K562 (cell line): ENCODE measurements at regions of chr1 and their contacts with region 1.

Region 1: GRCh38 chr1:157307491-157307890 is 169.3 kb upstream of the ETV3 start:
- DNase-seq: no peak
- ATAC-seq: no peak
- H3K4me3 ChIP-seq: no peak overlapping the region
- H3K27ac ChIP-seq: no peak overlapping the region
- H3K4me1 ChIP-seq: peaks cover 10 to 32% of the 10 kb centered on the region in 2 experiments
- H3K27me3 ChIP-seq: no peaks in the 10 kb centered on the region
- CTCF ChIP-seq: no peak
- EP300 ChIP-seq: no peak
- POLR2A ChIP-seq: no peak
- RAD21 ChIP-seq: no peak

Region 2: GRCh38 chr1:156214028-156214748 is 1093.3 kb before region 1 on chr1:
- CTCF ChIA-PET with region 1: no interaction called
- POLR2A ChIA-PET with region 1: no interaction called
- in situ Hi-C with region 1: no loop called
- intact Hi-C with region 1: no loop called
- DNase-seq: peak; percentile 44 to 61 (median 48)
- ATAC-seq: no peak
- H3K4me3 ChIP-seq: peak overlapping the region; percentile 78
- H3K27ac ChIP-seq: peak overlapping the region; percentile 100
- H3K4me1 ChIP-seq: peaks cover 11 to 17% of the 10 kb centered on the region in 2 experiments; a peak in 4 of 5 replicates
- H3K27me3 ChIP-seq: no peaks in the 10 kb centered on the region
- CTCF ChIP-seq: no peak
- EP300 ChIP-seq: no peak
- POLR2A ChIP-seq: no peak
- RAD21 ChIP-seq: no peak

Region 3: DNA sequence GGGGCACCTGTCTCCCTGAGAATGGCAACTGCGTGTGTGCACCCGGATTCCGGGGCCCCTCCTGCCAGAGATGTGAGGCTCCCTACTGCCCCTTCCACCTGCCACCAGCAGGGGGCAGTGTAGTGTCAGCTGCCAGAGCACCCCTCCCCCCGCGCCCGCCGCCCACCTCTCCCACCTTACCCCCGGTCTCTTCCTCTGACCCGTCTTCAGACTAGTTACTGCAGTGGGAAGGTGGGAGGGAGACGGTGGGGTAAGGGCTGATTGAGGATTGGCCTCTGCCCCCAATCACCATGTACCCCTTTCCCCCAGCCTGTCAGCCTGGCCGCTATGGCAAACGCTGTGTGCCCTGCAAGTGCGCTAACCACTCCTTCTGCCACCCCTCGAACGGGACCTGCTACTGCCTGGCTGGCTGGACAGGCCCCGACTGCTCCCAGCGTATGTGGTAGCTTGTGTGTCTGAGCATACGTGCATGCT is 397.1 kb before region 1 on chr1:
- CTCF ChIA-PET with region 1: no interaction called
- POLR2A ChIA-PET with region 1: no interaction called
- in situ Hi-C with region 1: no loop called
- intact Hi-C with region 1: no loop called
- DNase-seq: peak; percentile 79 to 89 (median 86)
- ATAC-seq: peak; percentile 49
- H3K4me3 ChIP-seq: peak overlapping the region; percentile 14; the same call in 1 of the 2 replicates
- H3K27ac ChIP-seq: no peak overlapping the region
- H3K4me1 ChIP-seq: peaks cover 52 to 73% of the 10 kb centered on the region in 2 experiments
- H3K27me3 ChIP-seq: no peaks in the 10 kb centered on the region
- CTCF ChIP-seq: peak; percentile 72 to 82 (median 76)
- EP300 ChIP-seq: no peak
- POLR2A ChIP-seq: no peak
- RAD21 ChIP-seq: peak; percentile 49 to 64

Region 4: DNA sequence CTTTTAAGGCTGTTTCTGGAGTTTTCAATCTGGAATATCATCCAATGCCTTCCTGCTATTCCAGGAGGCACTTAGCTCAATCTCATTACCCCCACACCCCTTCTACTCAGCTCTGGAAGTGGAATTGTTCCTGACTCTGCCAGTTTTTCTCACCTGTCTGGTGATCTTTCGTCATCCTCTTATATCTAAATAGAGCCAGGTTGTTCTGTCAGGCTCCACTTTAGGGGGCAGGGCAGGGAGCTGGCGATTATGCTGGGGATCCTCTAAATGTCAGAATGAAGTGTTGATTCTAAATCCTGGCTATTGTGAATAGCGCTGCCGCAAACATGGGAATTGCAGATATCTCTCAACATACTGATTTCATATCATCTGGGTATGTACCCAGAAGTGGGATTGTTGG is 105.7 kb before region 1 on chr1:
- CTCF ChIA-PET with region 1: no interaction called
- POLR2A ChIA-PET with region 1: interaction called, 3 read pairs
- in situ Hi-C with region 1: loop called (anchors 5 kb)
- intact Hi-C with region 1: loop called (anchors 1 kb)
- DNase-seq: no peak
- ATAC-seq: no peak
- H3K4me3 ChIP-seq: no peak overlapping the region
- H3K27ac ChIP-seq: no peak overlapping the region
- H3K4me1 ChIP-seq: peaks cover 3 to 4% of the 10 kb centered on the region in 2 experiments; a peak in 2 of 5 replicates
- H3K27me3 ChIP-seq: peaks cover 0 to 4% of the 10 kb centered on the region in 2 experiments; a peak in 1 of 5 replicates
- CTCF ChIP-seq: no peak
- EP300 ChIP-seq: no peak
- POLR2A ChIP-seq: no peak
- RAD21 ChIP-seq: no peak

Region 5: GRCh38 chr1:157348538-157349480 is 41.3 kb after region 1 on chr1:
- CTCF ChIA-PET with region 1: no interaction called
- POLR2A ChIA-PET with region 1: no interaction called
- in situ Hi-C with region 1: no loop called
- intact Hi-C with region 1: loop called (anchors 5 kb)
- DNase-seq: no peak
- ATAC-seq: no peak
- H3K4me3 ChIP-seq: no peak overlapping the region
- H3K27ac ChIP-seq: no peak overlapping the region
- H3K4me1 ChIP-seq: no peaks in the 10 kb centered on the region; a peak in 2 of 5 replicates
- H3K27me3 ChIP-seq: no peaks in the 10 kb centered on the region
- CTCF ChIP-seq: no peak
- EP300 ChIP-seq: no peak
- POLR2A ChIP-seq: no peak
- RAD21 ChIP-seq: no peak

Region 6: GRCh38 chr1:157369808-157370521 is 62.5 kb after region 1 on chr1:
- CTCF ChIA-PET with region 1: interaction called, 4 read pairs
- POLR2A ChIA-PET with region 1: interaction called, 3 read pairs
- in situ Hi-C with region 1: no loop called
- intact Hi-C with region 1: loop called (anchors 5 kb)
- DNase-seq: peak; percentile 61 to 88 (median 66)
- ATAC-seq: peak; percentile 80
- H3K4me3 ChIP-seq: no peak overlapping the region
- H3K27ac ChIP-seq: peak overlapping the region; percentile 13; the same call in 1 of the 3 replicates
- H3K4me1 ChIP-seq: peaks cover 13 to 54% of the 10 kb centered on the region in 2 experiments; a peak in 4 of 5 replicates
- H3K27me3 ChIP-seq: no peaks in the 10 kb centered on the region
- CTCF ChIP-seq: peak; percentile 80 to 86 (median 85)
- EP300 ChIP-seq: no peak
- POLR2A ChIP-seq: no peak
- RAD21 ChIP-seq: peak; percentile 84 to 88

Region 7: GRCh38 chr1:157813269-157813668 is 505.8 kb after region 1 on chr1:
- CTCF ChIA-PET with region 1: no interaction called
- POLR2A ChIA-PET with region 1: no interaction called
- in situ Hi-C with region 1: no loop called
- intact Hi-C with region 1: no loop called
- DNase-seq: no peak
- ATAC-seq: no peak
- H3K4me3 ChIP-seq: no peak overlapping the region
- H3K27ac ChIP-seq: no peak overlapping the region
- H3K4me1 ChIP-seq: no peaks in the 10 kb centered on the region
- H3K27me3 ChIP-seq: no peaks in the 10 kb centered on the region
- CTCF ChIP-seq: no peak
- EP300 ChIP-seq: no peak
- POLR2A ChIP-seq: no peak
- RAD21 ChIP-seq: no peak